ENCODE measurements at regions of chr3 and their contacts with region 1.

Region 1: GRCh38 chr3:167380004-167380689 is at the start of gene ZBBX:
- DNase-seq: peak; percentile 79
- H3K4me3 Mint-ChIP-seq: peak within 1 kb of the TSS; percentile 56
- H3K27ac Mint-ChIP-seq: no peak within 1 kb of the TSS
- H3K4me1 Mint-ChIP-seq: peaks cover 8% of the 10 kb centered on the region
- H3K27me3 Mint-ChIP-seq: peaks cover 6% of the 10 kb centered on the region
- total RNA-seq, gene ZBBX: not detected in 2 replicates

Region 2: GRCh38 chr3:166764698-166765318 is 615.3 kb before region 1 on chr3:
- intact Hi-C with region 1: no loop called
- DNase-seq: no peak
- H3K4me3 Mint-ChIP-seq: no peak overlapping the region
- H3K27ac Mint-ChIP-seq: no peak overlapping the region
- H3K4me1 Mint-ChIP-seq: no peaks in the 10 kb centered on the region
- H3K27me3 Mint-ChIP-seq: no peaks in the 10 kb centered on the region

Region 3: GRCh38 chr3:167684388-167684993 is 304.3 kb after region 1 on chr3:
- intact Hi-C with region 1: loop called (anchors 2 kb)
- DNase-seq: no peak
- H3K4me3 Mint-ChIP-seq: no peak overlapping the region
- H3K27ac Mint-ChIP-seq: no peak overlapping the region
- H3K4me1 Mint-ChIP-seq: peaks cover 8% of the 10 kb centered on the region
- H3K27me3 Mint-ChIP-seq: no peaks in the 10 kb centered on the region

Region 4: GRCh38 chr3:167734498-167735232 is 354.5 kb after region 1 on chr3 and contains the start of gene PDCD10:
- intact Hi-C with region 1: loop called (anchors 2 kb)
- DNase-seq: peak; percentile 95
- H3K4me3 Mint-ChIP-seq: no peak within 1 kb of the TSS
- H3K27ac Mint-ChIP-seq: no peak within 1 kb of the TSS
- H3K4me1 Mint-ChIP-seq: peaks cover 16% of the 10 kb centered on the region
- H3K27me3 Mint-ChIP-seq: peaks cover 7% of the 10 kb centered on the region
- total RNA-seq, gene PDCD10: 73.8 and 80.9 TPM in 2 replicates

Region 5: GRCh38 chr3:167882067-167882667 is 502.0 kb after region 1 on chr3:
- intact Hi-C with region 1: loop called (anchors 1 kb)
- DNase-seq: no peak
- H3K4me3 Mint-ChIP-seq: no peak overlapping the region
- H3K27ac Mint-ChIP-seq: no peak overlapping the region
- H3K4me1 Mint-ChIP-seq: no peaks in the 10 kb centered on the region
- H3K27me3 Mint-ChIP-seq: peaks cover 12% of the 10 kb centered on the region